B cell (primary cell): ENCODE measurements at regions of chr1 and their contacts with region 1.

Region 1: DNA sequence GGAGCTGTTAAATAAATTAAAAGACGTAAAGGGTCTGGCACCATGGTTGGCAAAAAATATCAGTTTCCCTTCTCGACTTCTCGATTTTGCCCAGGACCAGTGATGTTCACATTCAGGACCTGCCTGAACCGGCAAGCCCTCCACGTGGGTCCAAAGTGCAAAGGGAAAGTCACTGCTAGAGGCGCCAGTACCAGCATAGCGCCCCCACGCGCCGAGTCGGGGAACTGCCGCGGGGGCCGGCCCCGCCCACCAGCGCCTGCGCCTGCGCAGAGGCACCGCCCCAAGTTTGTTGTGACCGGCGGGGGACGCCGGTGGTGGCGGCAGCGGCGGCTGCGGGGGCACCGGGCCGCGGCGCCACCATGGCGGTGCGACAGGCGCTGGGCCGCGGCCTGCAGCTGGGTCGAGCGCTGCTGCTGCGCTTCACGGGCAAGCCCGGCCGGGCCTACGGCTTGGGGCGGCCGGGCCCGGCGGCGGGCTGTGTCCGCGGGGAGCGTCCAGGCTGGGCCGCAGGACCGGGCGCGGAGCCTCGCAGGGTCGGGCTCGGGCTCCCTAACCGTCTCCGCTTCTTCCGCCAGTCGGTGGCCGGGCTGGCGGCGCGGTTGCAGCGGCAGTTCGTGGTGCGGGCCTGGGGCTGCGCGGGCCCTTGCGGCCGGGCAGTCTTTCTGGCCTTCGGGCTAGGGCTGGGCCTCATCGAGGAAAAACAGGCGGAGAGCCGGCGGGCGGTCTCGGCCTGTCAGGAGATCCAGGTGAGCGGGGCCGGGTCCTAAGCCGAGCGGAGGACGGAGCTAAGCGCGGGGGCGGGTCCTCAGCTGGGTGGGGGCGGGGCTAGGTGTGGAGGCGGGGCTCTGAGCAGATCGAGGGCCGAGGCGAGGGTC is at the start of gene PINK1:
- DNase-seq: peak; percentile 91
- ATAC-seq: peak; percentile 92
- H3K4me3 ChIP-seq: peak within 1 kb of the TSS; percentile 56 to 98 (median 90)
- H3K4me3 Mint-ChIP-seq: peak within 1 kb of the TSS; percentile 93
- H3K27ac ChIP-seq: peak within 1 kb of the TSS; percentile 48 to 59
- H3K27ac Mint-ChIP-seq: peak within 1 kb of the TSS; percentile 85
- H3K4me1 ChIP-seq: peaks cover 8 to 16% of the 10 kb centered on the region in 2 donors
- H3K4me1 Mint-ChIP-seq: peaks cover 14% of the 10 kb centered on the region
- H3K27me3 ChIP-seq: no peaks in the 10 kb centered on the region
- H3K27me3 Mint-ChIP-seq: no peaks in the 10 kb centered on the region
- CTCF ChIP-seq: peak; percentile 97
- total RNA-seq, gene PINK1: 14.3 and 15.3 TPM in 2 replicates

Region 2: GRCh38 chr1:19918057-19918456 is 715.4 kb before region 1 on chr1:
- CTCF ChIA-PET with region 1: interaction called, 4 read pairs
- POLR2A ChIA-PET with region 1: no interaction called
- intact Hi-C with region 1: loop called (anchors 5 kb)
- DNase-seq: peak; percentile 85
- ATAC-seq: peak; percentile 49
- H3K4me3 ChIP-seq: no peak overlapping the region
- H3K4me3 Mint-ChIP-seq: no peak overlapping the region
- H3K27ac ChIP-seq: no peak overlapping the region
- H3K27ac Mint-ChIP-seq: no peak overlapping the region
- H3K4me1 ChIP-seq: no peaks in the 10 kb centered on the region
- H3K4me1 Mint-ChIP-seq: peaks cover 4% of the 10 kb centered on the region
- H3K27me3 ChIP-seq: peaks cover 0 to 5% (median 0%) of the 10 kb centered on the region in 4 experiments
- H3K27me3 Mint-ChIP-seq: peaks cover 4% of the 10 kb centered on the region
- CTCF ChIP-seq: peak; percentile 86

Region 3: DNA sequence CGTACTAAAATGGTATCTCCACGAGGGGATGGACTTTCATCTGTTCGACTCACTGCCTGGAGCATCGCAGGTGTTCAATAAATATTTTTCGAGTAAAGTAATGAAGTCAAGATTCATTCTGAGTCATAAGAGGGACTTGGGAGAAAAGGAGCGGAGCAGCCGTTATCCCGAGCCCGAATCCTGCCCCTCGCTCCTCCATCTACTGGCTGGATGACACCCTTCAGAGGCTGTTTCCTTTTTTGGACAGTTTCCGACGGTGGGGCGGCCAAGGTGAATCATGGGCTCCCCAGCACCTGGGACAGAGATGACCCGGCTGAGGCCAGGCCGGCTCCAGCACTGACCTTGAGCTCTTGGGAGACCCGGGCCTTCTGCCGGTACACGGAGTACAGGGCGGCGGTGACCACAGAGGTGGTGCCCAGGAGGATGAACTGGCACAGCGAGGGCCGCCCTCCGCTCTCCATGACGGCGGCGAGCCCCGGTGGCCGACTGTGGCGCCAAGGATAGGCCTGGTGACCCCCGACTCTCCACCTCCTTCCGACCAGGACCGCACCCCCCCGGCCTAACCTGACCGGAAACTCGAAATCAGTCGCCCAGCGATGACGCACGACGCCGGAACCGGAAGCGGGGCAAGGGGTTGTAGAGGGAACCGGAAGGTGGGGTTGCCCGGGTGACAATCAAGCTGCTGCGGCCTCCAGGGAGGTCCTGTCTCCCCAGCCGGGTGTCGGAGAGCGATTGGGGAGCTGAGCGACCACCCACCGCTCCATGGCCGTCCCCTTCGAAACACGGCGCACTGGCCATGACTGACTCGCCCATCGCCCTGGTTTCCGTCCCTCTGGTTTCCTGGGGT is 125.6 kb before region 1 on chr1 and contains the start of gene MUL1:
- CTCF ChIA-PET with region 1: interaction called, 4 read pairs
- POLR2A ChIA-PET with region 1: interaction called, 3 read pairs
- intact Hi-C with region 1: loop called (anchors 1 kb)
- DNase-seq: peak; percentile 93
- ATAC-seq: peak; percentile 87
- H3K4me3 ChIP-seq: peak within 1 kb of the TSS; percentile 76 to 100 (median 86)
- H3K4me3 Mint-ChIP-seq: peak within 1 kb of the TSS; percentile 91
- H3K27ac ChIP-seq: peak within 1 kb of the TSS; percentile 93 to 96
- H3K27ac Mint-ChIP-seq: peak within 1 kb of the TSS; percentile 93
- H3K4me1 ChIP-seq: peaks cover 14 to 22% of the 10 kb centered on the region in 2 donors
- H3K4me1 Mint-ChIP-seq: peaks cover 22% of the 10 kb centered on the region
- H3K27me3 ChIP-seq: peaks cover 0 to 13% (median 1%) of the 10 kb centered on the region in 4 experiments
- H3K27me3 Mint-ChIP-seq: peaks cover 4% of the 10 kb centered on the region
- CTCF ChIP-seq: no peak
- total RNA-seq, gene MUL1: 23.9 and 24.6 TPM in 2 replicates

Region 4: GRCh38 chr1:20521960-20522861 is 111.2 kb before region 1 on chr1:
- CTCF ChIA-PET with region 1: interaction called, 18 read pairs
- POLR2A ChIA-PET with region 1: no interaction called
- intact Hi-C with region 1: no loop called
- DNase-seq: peak; percentile 75
- ATAC-seq: peak; percentile 17
- H3K4me3 ChIP-seq: no peak overlapping the region
- H3K4me3 Mint-ChIP-seq: no peak overlapping the region
- H3K27ac ChIP-seq: no peak overlapping the region
- H3K27ac Mint-ChIP-seq: no peak overlapping the region
- H3K4me1 ChIP-seq: peaks cover 0 to 3% of the 10 kb centered on the region in 2 donors
- H3K4me1 Mint-ChIP-seq: no peaks in the 10 kb centered on the region
- H3K27me3 ChIP-seq: peaks cover 0 to 9% (median 0%) of the 10 kb centered on the region in 4 experiments
- H3K27me3 Mint-ChIP-seq: peaks cover 28% of the 10 kb centered on the region
- CTCF ChIP-seq: peak; percentile 87

Region 5: DNA sequence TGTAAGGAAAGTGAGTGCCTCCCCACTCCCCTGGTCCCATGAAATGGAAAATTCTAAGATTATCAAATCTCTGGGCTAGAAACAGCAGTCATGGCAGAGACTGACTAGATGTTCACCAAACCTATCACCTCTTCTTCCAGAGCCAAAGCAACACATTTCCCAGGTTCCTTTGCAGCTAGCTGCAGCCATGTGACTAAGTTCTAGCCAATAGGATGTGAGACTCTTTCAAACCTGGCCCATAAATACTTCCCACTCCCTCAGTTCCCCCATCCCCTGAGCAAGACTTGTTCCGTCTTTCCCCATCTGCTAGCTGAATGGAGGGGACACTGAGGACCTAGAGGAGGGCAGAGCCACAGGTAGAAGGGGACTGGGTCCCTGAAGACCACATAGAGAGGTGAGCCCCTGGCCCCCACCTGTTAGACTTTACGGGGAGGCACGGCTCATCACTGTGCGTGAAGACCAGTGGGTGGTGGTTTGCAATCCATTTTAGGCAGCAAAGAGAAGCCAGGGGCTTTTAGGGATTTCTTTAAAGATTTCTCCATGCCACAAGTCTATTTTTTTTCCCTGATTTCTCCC is 63.8 kb before region 1 on chr1:
- CTCF ChIA-PET with region 1: no interaction called
- POLR2A ChIA-PET with region 1: no interaction called
- intact Hi-C with region 1: no loop called
- DNase-seq: no peak
- ATAC-seq: no peak
- H3K4me3 ChIP-seq: no peak overlapping the region
- H3K4me3 Mint-ChIP-seq: no peak overlapping the region
- H3K27ac ChIP-seq: no peak overlapping the region
- H3K27ac Mint-ChIP-seq: no peak overlapping the region
- H3K4me1 ChIP-seq: no peaks in the 10 kb centered on the region
- H3K4me1 Mint-ChIP-seq: no peaks in the 10 kb centered on the region
- H3K27me3 ChIP-seq: peaks cover 0 to 22% (median 10%) of the 10 kb centered on the region in 4 experiments
- H3K27me3 Mint-ChIP-seq: peaks cover 52% of the 10 kb centered on the region
- CTCF ChIP-seq: no peak

Region 6: DNA sequence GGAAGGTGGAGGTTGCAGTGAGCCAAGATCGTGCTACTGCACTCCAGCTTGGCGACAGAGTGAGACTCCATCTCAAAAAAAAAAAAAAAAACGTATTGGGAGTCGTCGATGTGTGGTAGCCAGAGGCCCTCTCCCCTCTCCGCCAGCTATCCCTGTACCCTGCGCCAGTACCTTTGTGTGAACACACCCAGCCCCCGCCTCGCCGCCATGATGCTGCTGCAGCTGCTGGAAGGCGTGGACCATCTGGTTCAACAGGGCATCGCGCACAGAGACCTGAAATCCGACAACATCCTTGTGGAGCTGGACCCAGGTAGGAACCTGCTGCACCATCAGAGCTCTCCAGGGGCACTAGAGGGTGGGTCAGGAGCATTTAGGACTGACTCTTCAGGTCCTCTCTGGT is 12.0 kb after region 1 on chr1:
- CTCF ChIA-PET with region 1: interaction called, 15 read pairs
- POLR2A ChIA-PET with region 1: no interaction called
- intact Hi-C with region 1: no loop called
- DNase-seq: no peak
- ATAC-seq: no peak
- H3K4me3 ChIP-seq: no peak overlapping the region
- H3K4me3 Mint-ChIP-seq: no peak overlapping the region
- H3K27ac ChIP-seq: no peak overlapping the region
- H3K27ac Mint-ChIP-seq: no peak overlapping the region
- H3K4me1 ChIP-seq: no peaks in the 10 kb centered on the region
- H3K4me1 Mint-ChIP-seq: no peaks in the 10 kb centered on the region
- H3K27me3 ChIP-seq: no peaks in the 10 kb centered on the region
- H3K27me3 Mint-ChIP-seq: no peaks in the 10 kb centered on the region
- CTCF ChIP-seq: no peak

Region 7: GRCh38 chr1:20661207-20662109 is 28.0 kb after region 1 on chr1 and contains the start of gene DDOST:
- CTCF ChIA-PET with region 1: interaction called, 21 read pairs
- POLR2A ChIA-PET with region 1: interaction called, 5 read pairs
- intact Hi-C with region 1: loop called (anchors 1 kb)
- DNase-seq: peak; percentile 96
- ATAC-seq: peak; percentile 96
- H3K4me3 ChIP-seq: peak within 1 kb of the TSS; percentile 50 to 97 (median 85)
- H3K4me3 Mint-ChIP-seq: peak within 1 kb of the TSS; percentile 95
- H3K27ac ChIP-seq: peak within 1 kb of the TSS; percentile 56 to 76
- H3K27ac Mint-ChIP-seq: peak within 1 kb of the TSS; percentile 98
- H3K4me1 ChIP-seq: peaks cover 19 to 23% of the 10 kb centered on the region in 2 donors
- H3K4me1 Mint-ChIP-seq: peaks cover 39% of the 10 kb centered on the region
- H3K27me3 ChIP-seq: no peaks in the 10 kb centered on the region
- H3K27me3 Mint-ChIP-seq: no peaks in the 10 kb centered on the region
- CTCF ChIP-seq: peak; percentile 46
- total RNA-seq, gene DDOST: 99.2 and 108 TPM in 2 replicates

Region 8: GRCh38 chr1:22451702-22452474 is 1818.5 kb after region 1 on chr1 and contains the start of gene ZBTB40:
- CTCF ChIA-PET with region 1: no interaction called
- POLR2A ChIA-PET with region 1: no interaction called
- intact Hi-C with region 1: loop called (anchors 5 kb)
- DNase-seq: peak; percentile 96
- ATAC-seq: peak; percentile 88
- H3K4me3 ChIP-seq: peak within 1 kb of the TSS; percentile 63 to 92 (median 72)
- H3K4me3 Mint-ChIP-seq: peak within 1 kb of the TSS; percentile 95
- H3K27ac ChIP-seq: peak within 1 kb of the TSS; percentile 73 to 93
- H3K27ac Mint-ChIP-seq: peak within 1 kb of the TSS; percentile 96
- H3K4me1 ChIP-seq: peaks cover 14 to 17% of the 10 kb centered on the region in 2 donors
- H3K4me1 Mint-ChIP-seq: peaks cover 37% of the 10 kb centered on the region
- H3K27me3 ChIP-seq: no peaks in the 10 kb centered on the region
- H3K27me3 Mint-ChIP-seq: no peaks in the 10 kb centered on the region
- CTCF ChIP-seq: no peak
- total RNA-seq, gene ZBTB40: 51.9 and 56.3 TPM in 2 replicates